ENCODE measurements at regions of chr21 and their contacts with region 1.

Region 1: GRCh38 chr21:29078869-29079767 is 5.7 kb upstream of the CCT8 start:
- DNase-seq: peak; percentile 68
- ATAC-seq: peak; percentile 69
- H3K4me3 ChIP-seq: peak overlapping the region; percentile 41; the same call in 1 of the 2 replicates
- H3K27ac ChIP-seq: peak overlapping the region; percentile 60
- H3K4me1 ChIP-seq: peaks cover 16% of the 10 kb centered on the region
- H3K27me3 ChIP-seq: no peaks in the 10 kb centered on the region
- CTCF ChIP-seq: no peak
- EP300 ChIP-seq: 0 out of 4 replicates have a peak, but pooled peaks of 1 of the 2 experiments have one; percentile 34
- POLR2A ChIP-seq: no peak
- RAD21 ChIP-seq: no peak

Region 2: DNA sequence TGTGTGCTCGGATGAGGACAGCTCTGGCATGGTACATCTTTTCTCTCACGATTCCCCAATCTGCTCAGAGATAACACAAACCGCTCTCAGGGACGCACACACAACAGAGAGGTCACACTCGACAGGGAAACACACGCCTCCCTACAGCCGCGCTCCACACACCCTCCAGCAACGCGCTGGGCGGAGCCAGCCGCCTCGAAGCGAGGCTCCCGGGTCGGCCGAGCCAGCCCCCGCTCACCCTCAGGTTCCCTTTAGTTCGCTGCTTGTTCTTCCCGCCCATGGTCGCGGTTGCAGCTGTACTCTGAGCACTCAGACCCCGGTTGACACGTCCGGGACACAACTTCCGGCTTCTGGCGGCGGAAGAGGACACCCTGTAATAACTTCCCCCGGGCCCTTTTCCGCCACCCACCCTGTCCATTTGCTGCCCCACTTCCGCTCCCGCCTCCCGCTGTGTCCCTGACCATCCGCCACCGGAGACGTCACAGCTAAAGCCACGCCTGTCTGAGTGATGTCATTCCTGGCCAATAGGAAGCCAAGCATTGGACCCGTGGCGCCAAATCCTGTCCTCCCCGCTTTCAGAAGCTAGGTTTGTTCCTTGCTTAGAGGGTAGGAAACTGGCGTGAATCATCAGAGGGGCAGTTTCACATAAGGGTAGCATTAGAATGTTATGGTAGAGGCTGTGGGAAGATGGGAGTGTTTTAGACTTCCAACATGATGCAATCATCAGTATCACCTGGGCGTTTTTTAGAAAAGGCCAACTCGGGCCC is 86.4 kb before region 1 on chr21 and contains the start of gene LTN1:
- CTCF ChIA-PET with region 1: no interaction called
- POLR2A ChIA-PET with region 1: no interaction called
- RAD21 ChIA-PET with region 1: interaction called, 4 read pairs
- SMC1A ChIA-PET with region 1: interaction called, 4 read pairs
- in situ Hi-C with region 1: no loop called
- intact Hi-C with region 1: loop called (anchors 5 kb)
- DNase-seq: peak; percentile 99
- ATAC-seq: peak; percentile 95
- H3K4me3 ChIP-seq: peak within 1 kb of the TSS; percentile 97
- H3K27ac ChIP-seq: peak within 1 kb of the TSS; percentile 73
- H3K4me1 ChIP-seq: peaks cover 3% of the 10 kb centered on the region
- H3K27me3 ChIP-seq: no peaks in the 10 kb centered on the region
- CTCF ChIP-seq: no peak
- EP300 ChIP-seq: peak in 1 of 2 experiments; percentile 28; a peak in 1 of 4 replicates
- POLR2A ChIP-seq: peak; percentile 86
- RAD21 ChIP-seq: 0 out of 2 replicates have a peak, but pooled peaks have one; percentile 4
- polyA plus RNA-seq, gene LTN1: 3.5 to 10.1 TPM

Region 3: GRCh38 chr21:29091032-29091431 is 11.9 kb after region 1 on chr21:
- CTCF ChIA-PET with region 1: interaction called, 11 read pairs
- POLR2A ChIA-PET with region 1: interaction called, 3 read pairs
- RAD21 ChIA-PET with region 1: interaction called, 5 read pairs
- SMC1A ChIA-PET with region 1: interaction called, 12 read pairs
- in situ Hi-C with region 1: no loop called
- intact Hi-C with region 1: no loop called
- DNase-seq: no peak
- ATAC-seq: no peak
- H3K4me3 ChIP-seq: no peak overlapping the region
- H3K27ac ChIP-seq: no peak overlapping the region
- H3K4me1 ChIP-seq: no peaks in the 10 kb centered on the region
- H3K27me3 ChIP-seq: no peaks in the 10 kb centered on the region
- CTCF ChIP-seq: no peak
- EP300 ChIP-seq: no peak
- POLR2A ChIP-seq: no peak
- RAD21 ChIP-seq: no peak

Region 4: GRCh38 chr21:29125191-29125590 is 46.1 kb after region 1 on chr21:
- CTCF ChIA-PET with region 1: interaction called, 3 read pairs
- POLR2A ChIA-PET with region 1: interaction called, 6 read pairs
- RAD21 ChIA-PET with region 1: interaction called, 6 read pairs
- SMC1A ChIA-PET with region 1: interaction called, 13 read pairs
- in situ Hi-C with region 1: no loop called
- intact Hi-C with region 1: no loop called
- DNase-seq: peak; percentile 71
- ATAC-seq: peak; percentile 94
- H3K4me3 ChIP-seq: peak overlapping the region; percentile 43
- H3K27ac ChIP-seq: peak overlapping the region; percentile 80
- H3K4me1 ChIP-seq: peaks cover 28% of the 10 kb centered on the region
- H3K27me3 ChIP-seq: no peaks in the 10 kb centered on the region
- CTCF ChIP-seq: peak in 2 of 3 experiments; percentile 16 to 26; a peak in 2 of 6 replicates
- EP300 ChIP-seq: peak in 1 of 2 experiments; percentile 43; a peak in 1 of 4 replicates
- POLR2A ChIP-seq: no peak
- RAD21 ChIP-seq: peak; percentile 32; the same call in 1 of the 2 replicates

Region 5: DNA sequence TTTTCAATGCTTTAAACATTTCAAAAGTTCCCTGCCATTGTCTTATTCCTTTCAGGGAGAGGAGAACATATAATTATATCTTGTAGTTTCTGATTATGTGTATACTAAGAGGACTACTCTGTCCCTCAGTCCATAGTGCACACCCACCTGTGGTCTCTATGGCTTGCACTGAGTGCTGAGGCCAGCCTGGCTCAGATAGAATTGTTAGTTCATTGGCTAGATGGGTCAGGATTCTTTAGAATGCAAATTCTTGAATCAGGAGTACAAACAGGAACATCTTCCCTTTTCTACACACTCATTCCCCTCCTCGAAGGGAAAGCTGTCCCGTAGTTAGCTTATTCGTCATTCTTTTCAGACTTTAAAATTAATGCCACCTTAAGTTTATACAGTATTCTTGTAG is 227.8 kb after region 1 on chr21:
- CTCF ChIA-PET with region 1: interaction called, 6 read pairs
- POLR2A ChIA-PET with region 1: interaction called, 68 read pairs
- RAD21 ChIA-PET with region 1: interaction called, 64 read pairs
- SMC1A ChIA-PET with region 1: interaction called, 3 read pairs
- in situ Hi-C with region 1: loop called (anchors 5 kb)
- intact Hi-C with region 1: no loop called
- DNase-seq: no peak
- ATAC-seq: peak; percentile 49
- H3K4me3 ChIP-seq: peak overlapping the region; percentile 14; the same call in 1 of the 2 replicates
- H3K27ac ChIP-seq: peak overlapping the region; percentile 41
- H3K4me1 ChIP-seq: peaks cover 25% of the 10 kb centered on the region
- H3K27me3 ChIP-seq: no peaks in the 10 kb centered on the region
- CTCF ChIP-seq: no peak
- EP300 ChIP-seq: no peak
- POLR2A ChIP-seq: no peak
- RAD21 ChIP-seq: no peak

Region 6: DNA sequence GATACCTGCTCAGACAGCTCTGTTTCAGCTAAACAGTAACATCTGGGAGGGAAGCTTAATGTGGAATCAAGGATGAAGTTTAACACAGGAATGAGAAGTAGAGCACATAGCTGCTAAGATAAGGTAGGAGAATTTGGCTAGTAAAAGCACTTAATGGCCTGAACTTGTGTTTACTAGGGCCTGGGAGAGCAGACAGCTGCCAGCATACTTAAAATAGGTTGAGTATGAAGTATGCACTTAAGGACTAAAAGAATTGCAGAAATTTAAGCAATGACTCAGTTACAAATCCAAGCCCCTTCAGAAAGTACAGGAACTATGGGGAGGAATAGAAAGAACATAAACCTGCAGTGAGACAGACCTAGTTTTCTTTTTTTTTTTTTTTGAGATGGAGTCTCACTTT is 272.6 kb after region 1 on chr21:
- CTCF ChIA-PET with region 1: interaction called, 10 read pairs
- POLR2A ChIA-PET with region 1: no interaction called
- RAD21 ChIA-PET with region 1: interaction called, 3 read pairs
- SMC1A ChIA-PET with region 1: interaction called, 4 read pairs
- in situ Hi-C with region 1: no loop called
- intact Hi-C with region 1: no loop called
- DNase-seq: no peak
- ATAC-seq: no peak
- H3K4me3 ChIP-seq: no peak overlapping the region
- H3K27ac ChIP-seq: no peak overlapping the region
- H3K4me1 ChIP-seq: peaks cover 16% of the 10 kb centered on the region
- H3K27me3 ChIP-seq: no peaks in the 10 kb centered on the region
- CTCF ChIP-seq: no peak
- EP300 ChIP-seq: no peak
- POLR2A ChIP-seq: no peak
- RAD21 ChIP-seq: no peak

Region 7: DNA sequence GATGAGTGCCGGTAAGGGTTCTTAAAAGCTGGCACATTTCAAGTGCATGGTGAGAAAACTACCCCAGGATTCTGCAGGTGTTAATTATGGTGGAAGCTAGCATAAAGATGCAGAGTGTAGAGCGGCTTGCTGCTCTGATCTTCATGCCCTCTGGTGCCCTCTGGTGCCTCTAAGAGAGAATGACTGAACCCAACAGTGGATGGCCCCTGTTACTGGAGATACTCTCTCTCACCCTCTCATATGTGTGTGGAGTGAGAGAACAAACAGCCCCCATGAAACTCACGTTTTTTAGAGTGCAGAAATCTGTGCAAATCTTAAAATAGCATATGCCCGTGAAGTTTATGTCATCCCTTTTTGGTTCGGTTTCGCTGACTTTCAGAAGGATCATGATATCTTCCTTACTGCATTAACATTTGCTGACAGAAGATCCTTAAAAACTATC is 770.6 kb after region 1 on chr21:
- CTCF ChIA-PET with region 1: no interaction called
- POLR2A ChIA-PET with region 1: no interaction called
- RAD21 ChIA-PET with region 1: no interaction called
- SMC1A ChIA-PET with region 1: no interaction called
- in situ Hi-C with region 1: loop called (anchors 10 kb)
- intact Hi-C with region 1: no loop called
- DNase-seq: peak; percentile 8
- ATAC-seq: peak; percentile 100
- H3K4me3 ChIP-seq: no peak overlapping the region
- H3K27ac ChIP-seq: no peak overlapping the region
- H3K4me1 ChIP-seq: no peaks in the 10 kb centered on the region
- H3K27me3 ChIP-seq: no peaks in the 10 kb centered on the region
- CTCF ChIP-seq: peak; percentile 68 to 83 (median 77); a peak in 5 of 6 replicates
- EP300 ChIP-seq: no peak
- POLR2A ChIP-seq: no peak
- RAD21 ChIP-seq: peak; percentile 90

Measured in GM12878 (cell line).